ENCODE measurements at regions of chr16 and their contacts with region 1.

Region 1: DNA sequence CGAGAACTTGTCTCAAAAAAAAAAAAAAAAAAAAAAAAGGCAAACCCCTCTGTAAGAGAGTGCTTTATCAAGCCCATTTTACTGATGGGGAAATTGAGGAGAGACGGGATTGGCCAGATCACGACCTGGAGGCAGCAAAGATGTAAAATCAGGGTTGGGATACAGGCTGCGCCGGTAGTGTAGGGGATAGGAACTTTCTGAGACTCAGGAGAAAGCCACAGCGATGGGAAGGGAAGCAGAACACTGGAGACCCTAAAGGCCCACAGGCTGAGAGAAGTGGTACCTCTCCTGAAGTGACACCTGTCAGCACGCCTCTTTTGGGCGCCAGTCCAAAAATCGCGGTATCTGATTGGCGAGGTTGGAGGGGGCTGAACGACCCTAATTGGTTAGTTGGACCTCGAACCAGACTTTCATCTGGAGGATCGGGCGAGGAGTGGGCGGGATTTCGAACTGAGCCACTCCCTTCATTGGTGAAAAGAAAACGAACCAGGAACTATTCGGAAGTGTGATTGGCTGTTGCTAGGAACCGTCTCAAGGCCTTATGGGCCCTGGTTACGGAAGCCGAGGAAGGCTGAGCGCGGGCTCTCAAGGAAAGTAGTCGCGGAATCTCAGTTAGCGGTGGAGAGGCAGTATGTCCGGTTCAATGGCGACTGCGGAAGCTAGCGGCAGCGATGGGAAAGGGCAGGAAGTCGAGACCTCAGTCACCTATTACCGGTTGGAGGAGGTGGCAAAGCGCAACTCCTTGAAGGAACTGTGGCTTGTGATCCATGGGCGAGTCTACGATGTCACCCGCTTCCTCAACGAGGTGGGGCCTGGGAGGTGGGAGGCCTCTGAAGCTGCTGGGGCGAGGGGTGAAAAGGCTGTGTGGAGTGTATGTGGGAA is at the start of gene CYB5B:
- DNase-seq: peak; percentile 90 to 99 (median 95)
- ATAC-seq: peak; percentile 94
- H3K4me3 ChIP-seq: peak within 1 kb of the TSS; percentile 97 to 99
- H3K4me3 Mint-ChIP-seq: peak within 1 kb of the TSS; percentile 98
- H3K27ac ChIP-seq: peak within 1 kb of the TSS; percentile 86 to 87
- H3K27ac Mint-ChIP-seq: peak within 1 kb of the TSS; percentile 95
- H3K4me1 ChIP-seq: peaks cover 8% of the 10 kb centered on the region
- H3K4me1 Mint-ChIP-seq: peaks cover 35% of the 10 kb centered on the region
- H3K27me3 ChIP-seq: no peaks in the 10 kb centered on the region
- H3K27me3 Mint-ChIP-seq: no peaks in the 10 kb centered on the region
- CTCF ChIP-seq: no peak
- total RNA-seq, gene CYB5B: 16.2 to 18.6 TPM

Region 2: DNA sequence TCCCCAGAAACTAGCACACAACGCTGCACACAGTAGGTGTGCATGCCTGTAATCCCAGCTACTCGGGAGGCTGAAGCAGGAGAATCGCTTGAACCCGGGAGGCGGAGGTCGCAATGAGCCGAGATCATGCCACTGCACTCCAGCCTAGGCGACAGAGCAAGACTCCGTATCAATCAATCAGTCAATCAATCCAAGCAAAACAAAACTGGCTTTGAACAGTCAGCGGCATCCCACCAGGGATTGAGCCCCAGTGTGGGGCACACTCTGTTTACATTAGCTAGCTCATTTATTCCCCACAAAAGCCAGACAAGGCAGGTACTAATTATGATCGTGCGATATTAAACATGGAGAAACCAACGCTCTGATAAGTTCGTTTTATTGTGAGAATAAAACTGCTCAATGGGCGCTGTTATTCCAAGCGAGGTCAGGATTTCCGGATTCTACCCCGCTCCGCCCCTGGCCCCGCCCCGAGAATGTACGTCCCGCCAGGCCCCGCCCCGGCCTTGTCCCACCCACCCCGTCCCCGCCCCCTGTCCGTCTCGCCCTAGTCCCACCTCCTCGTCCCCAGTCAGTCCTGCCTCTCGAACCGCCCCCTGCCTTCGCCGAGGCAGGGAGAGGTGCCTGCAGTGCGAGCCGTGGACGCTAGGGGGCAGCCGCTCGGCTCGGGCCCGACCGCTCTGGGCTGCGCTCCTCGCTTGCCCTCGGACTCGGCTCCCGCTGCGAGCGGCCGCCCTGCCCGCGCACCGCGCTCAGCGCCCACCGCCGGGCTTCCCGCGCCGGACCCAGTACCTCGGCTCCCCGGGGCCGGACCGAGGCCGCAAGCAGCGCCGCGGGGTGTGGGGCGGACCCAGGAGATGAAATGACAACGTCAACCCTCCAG is 113.4 kb before region 1 on chr16 and contains the start of gene VPS4A:
- CTCF ChIA-PET with region 1: no interaction called
- POLR2A ChIA-PET with region 1: no interaction called
- intact Hi-C with region 1: loop called (anchors 1 kb)
- DNase-seq: peak; percentile 96 to 99 (median 98)
- ATAC-seq: peak; percentile 98
- H3K4me3 ChIP-seq: peak within 1 kb of the TSS; percentile 66 to 79
- H3K4me3 Mint-ChIP-seq: peak within 1 kb of the TSS; percentile 99
- H3K27ac ChIP-seq: peak within 1 kb of the TSS; percentile 72 to 82
- H3K27ac Mint-ChIP-seq: peak within 1 kb of the TSS; percentile 95
- H3K4me1 ChIP-seq: peaks cover 17% of the 10 kb centered on the region
- H3K4me1 Mint-ChIP-seq: peaks cover 27% of the 10 kb centered on the region
- H3K27me3 ChIP-seq: no peaks in the 10 kb centered on the region
- H3K27me3 Mint-ChIP-seq: no peaks in the 10 kb centered on the region
- CTCF ChIP-seq: peak; percentile 73
- total RNA-seq, gene VPS4A: 64.2 to 66.5 TPM

Region 3: GRCh38 chr16:69330286-69331109 is 93.8 kb before region 1 on chr16 and contains the start of gene PDF:
- CTCF ChIA-PET with region 1: no interaction called
- POLR2A ChIA-PET with region 1: no interaction called
- intact Hi-C with region 1: loop called in 1 of 2 experiments (anchors 2 kb)
- DNase-seq: peak in 8 of 9 experiments; percentile 79 to 91 (median 82)
- ATAC-seq: peak; percentile 91
- H3K4me3 ChIP-seq: peak within 1 kb of the TSS; percentile 53 to 83
- H3K4me3 Mint-ChIP-seq: peak within 1 kb of the TSS; percentile 79
- H3K27ac ChIP-seq: peak within 1 kb of the TSS; percentile 60 to 75
- H3K27ac Mint-ChIP-seq: peak within 1 kb of the TSS; percentile 74
- H3K4me1 ChIP-seq: peaks cover 43% of the 10 kb centered on the region
- H3K4me1 Mint-ChIP-seq: peaks cover 52% of the 10 kb centered on the region
- H3K27me3 ChIP-seq: no peaks in the 10 kb centered on the region
- H3K27me3 Mint-ChIP-seq: no peaks in the 10 kb centered on the region
- CTCF ChIP-seq: no peak
- total RNA-seq, gene PDF: 3.3 to 3.6 TPM

Region 4: DNA sequence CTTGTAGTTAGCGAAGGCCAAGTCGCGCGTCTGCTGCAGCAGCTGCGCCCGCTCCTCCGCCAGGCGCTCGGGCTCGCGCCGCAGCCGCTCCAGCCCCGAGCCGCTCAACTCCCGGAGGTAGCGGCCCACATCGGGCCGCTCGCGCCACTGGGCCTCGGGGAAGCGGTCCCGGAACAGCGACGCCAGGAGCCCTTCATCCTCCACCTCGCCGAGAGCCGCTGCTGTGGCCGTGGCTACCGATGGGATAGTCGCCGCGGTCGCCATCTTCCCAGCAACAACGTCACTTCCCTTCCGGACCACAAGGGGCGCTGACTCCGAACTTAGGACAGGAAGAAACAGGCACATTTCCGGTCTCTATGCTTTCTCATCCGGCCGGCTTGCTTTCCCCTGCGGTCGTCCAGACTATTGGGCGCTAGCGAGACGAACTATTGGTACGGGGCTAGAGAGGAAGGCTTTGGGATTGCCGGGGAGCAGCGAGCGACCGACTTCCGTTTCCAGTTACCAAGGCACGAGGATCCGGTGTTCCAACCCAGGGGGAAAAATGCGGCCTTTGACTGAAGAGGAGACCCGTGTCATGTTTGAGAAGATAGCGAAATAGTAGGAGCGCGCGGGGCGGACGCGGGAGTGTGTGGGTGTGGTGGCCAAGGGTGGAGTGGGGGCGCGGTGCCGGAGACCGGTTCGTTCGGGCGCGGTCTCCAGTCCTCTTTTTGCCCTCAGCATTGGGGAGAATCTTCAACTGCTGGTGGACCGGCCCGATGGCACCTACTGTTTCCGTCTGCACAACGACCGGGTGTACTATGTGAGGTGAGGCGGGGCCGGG is 84.8 kb before region 1 on chr16 and contains the starts of genes COG8 and NIP7:
- CTCF ChIA-PET with region 1: no interaction called
- POLR2A ChIA-PET with region 1: no interaction called
- intact Hi-C with region 1: loop called (anchors 1 kb)
- DNase-seq: peak; percentile 82 to 96 (median 91)
- ATAC-seq: peak; percentile 89
- H3K4me3 ChIP-seq: peak within 1 kb of the TSS; percentile 82 to 86
- H3K4me3 Mint-ChIP-seq: peak within 1 kb of the TSS; percentile 100
- H3K27ac ChIP-seq: peak within 1 kb of the TSS; percentile 70 to 85
- H3K27ac Mint-ChIP-seq: peak within 1 kb of the TSS; percentile 98
- H3K4me1 ChIP-seq: peaks cover 26% of the 10 kb centered on the region
- H3K4me1 Mint-ChIP-seq: peaks cover 58% of the 10 kb centered on the region
- H3K27me3 ChIP-seq: no peaks in the 10 kb centered on the region
- H3K27me3 Mint-ChIP-seq: no peaks in the 10 kb centered on the region
- CTCF ChIP-seq: peak; percentile 85
- total RNA-seq, gene COG8: 19.3 to 19.6 TPM
- total RNA-seq, gene NIP7: 44.9 to 50.0 TPM

Region 5: DNA sequence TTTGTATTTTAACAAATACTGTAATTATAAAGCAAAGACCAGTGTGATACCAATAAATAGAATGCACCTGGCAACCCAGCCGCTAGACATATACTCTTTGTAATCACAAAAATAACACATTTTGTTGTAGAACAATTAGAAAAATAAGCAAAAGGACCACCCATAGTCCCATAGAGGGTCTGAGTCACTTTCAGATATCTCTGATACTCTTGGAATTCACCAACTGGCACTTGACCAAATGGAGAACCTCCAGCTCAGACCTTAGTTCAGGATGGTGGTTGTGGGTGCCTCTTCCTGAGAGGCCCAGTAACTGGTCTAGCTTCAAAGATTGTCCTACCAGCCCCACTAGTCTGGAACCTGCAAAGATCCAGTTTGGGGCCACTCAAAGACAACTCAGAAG is 37.7 kb before region 1 on chr16:
- CTCF ChIA-PET with region 1: no interaction called
- POLR2A ChIA-PET with region 1: interaction called, 3 read pairs
- intact Hi-C with region 1: loop called (anchors 1 kb)
- DNase-seq: no peak
- ATAC-seq: no peak
- H3K4me3 ChIP-seq: peak overlapping the region in 1 of 2 experiments; percentile 46
- H3K4me3 Mint-ChIP-seq: peak overlapping the region; percentile 89
- H3K27ac ChIP-seq: peak overlapping the region in 1 of 2 experiments; percentile 55
- H3K27ac Mint-ChIP-seq: no peak overlapping the region
- H3K4me1 ChIP-seq: peaks cover 12% of the 10 kb centered on the region
- H3K4me1 Mint-ChIP-seq: peaks cover 30% of the 10 kb centered on the region
- H3K27me3 ChIP-seq: no peaks in the 10 kb centered on the region
- H3K27me3 Mint-ChIP-seq: no peaks in the 10 kb centered on the region
- CTCF ChIP-seq: no peak

Region 6: DNA sequence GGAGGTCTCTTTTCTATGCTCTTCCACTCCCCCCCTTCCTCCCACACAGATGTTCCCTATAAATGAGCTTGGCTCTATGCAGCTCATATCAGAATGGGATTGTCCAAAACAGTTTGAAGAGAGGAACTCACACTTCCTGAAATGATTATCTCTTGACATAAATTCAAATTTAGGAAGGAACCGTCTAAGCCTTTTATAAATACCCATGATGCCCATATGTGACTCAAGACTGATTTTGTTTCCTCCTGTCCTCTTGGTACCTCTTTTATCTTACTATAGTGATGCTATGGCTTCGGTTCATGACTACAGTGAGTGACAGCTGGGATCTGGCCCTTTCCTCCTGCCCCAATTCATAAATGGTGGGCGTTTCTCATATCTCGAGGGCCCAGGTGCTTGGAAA is 21.9 kb before region 1 on chr16:
- CTCF ChIA-PET with region 1: no interaction called
- POLR2A ChIA-PET with region 1: no interaction called
- intact Hi-C with region 1: no loop called
- DNase-seq: no peak
- ATAC-seq: no peak
- H3K4me3 ChIP-seq: no peak overlapping the region
- H3K4me3 Mint-ChIP-seq: no peak overlapping the region
- H3K27ac ChIP-seq: no peak overlapping the region
- H3K27ac Mint-ChIP-seq: no peak overlapping the region
- H3K4me1 ChIP-seq: no peaks in the 10 kb centered on the region
- H3K4me1 Mint-ChIP-seq: no peaks in the 10 kb centered on the region
- H3K27me3 ChIP-seq: no peaks in the 10 kb centered on the region
- H3K27me3 Mint-ChIP-seq: no peaks in the 10 kb centered on the region
- CTCF ChIP-seq: no peak

Region 7: DNA sequence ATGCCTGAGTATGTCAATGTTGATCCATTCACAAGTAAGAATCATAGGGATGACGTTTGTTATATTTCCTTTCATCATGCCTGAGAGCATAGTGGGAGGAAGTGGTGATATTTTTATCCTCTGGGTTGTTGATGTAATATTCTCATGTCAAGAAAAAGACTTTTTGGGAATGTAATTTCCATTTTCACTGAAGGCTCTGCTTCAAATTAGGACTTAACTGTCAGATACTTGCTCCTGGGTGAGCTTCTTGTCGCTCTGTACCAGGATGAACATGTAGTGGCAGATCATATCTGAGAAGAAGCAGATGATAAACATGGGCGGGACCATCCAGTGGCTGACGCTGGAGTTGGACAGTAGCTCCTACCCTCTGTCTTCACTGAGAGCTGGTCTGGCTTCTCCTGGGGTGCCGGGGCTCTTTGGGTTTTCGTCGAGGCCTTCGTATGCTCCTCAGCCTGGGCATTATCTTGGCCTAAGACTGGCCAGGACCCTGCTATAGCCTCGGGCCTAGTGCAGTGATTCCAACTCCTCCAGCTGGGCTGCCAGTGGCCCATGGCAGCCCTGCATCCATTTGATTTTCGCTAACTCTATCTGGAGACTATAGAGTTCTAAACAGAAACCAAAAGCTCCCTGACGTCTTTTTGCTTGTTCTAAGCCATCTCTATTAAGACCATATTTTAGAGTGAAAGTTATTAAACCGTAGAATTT is 19.8 kb after region 1 on chr16:
- CTCF ChIA-PET with region 1: no interaction called
- POLR2A ChIA-PET with region 1: interaction called, 4 read pairs
- intact Hi-C with region 1: loop called (anchors 1 to 2 kb)
- DNase-seq: peak in 8 of 9 experiments; percentile 11 to 63 (median 42)
- ATAC-seq: peak; percentile 80
- H3K4me3 ChIP-seq: peak overlapping the region; percentile 28 to 39
- H3K4me3 Mint-ChIP-seq: peak overlapping the region; percentile 82
- H3K27ac ChIP-seq: peak overlapping the region; percentile 57 to 86
- H3K27ac Mint-ChIP-seq: peak overlapping the region; percentile 98
- H3K4me1 ChIP-seq: peaks cover 12% of the 10 kb centered on the region
- H3K4me1 Mint-ChIP-seq: peaks cover 35% of the 10 kb centered on the region
- H3K27me3 ChIP-seq: no peaks in the 10 kb centered on the region
- H3K27me3 Mint-ChIP-seq: no peaks in the 10 kb centered on the region
- CTCF ChIP-seq: no peak

Region 8: DNA sequence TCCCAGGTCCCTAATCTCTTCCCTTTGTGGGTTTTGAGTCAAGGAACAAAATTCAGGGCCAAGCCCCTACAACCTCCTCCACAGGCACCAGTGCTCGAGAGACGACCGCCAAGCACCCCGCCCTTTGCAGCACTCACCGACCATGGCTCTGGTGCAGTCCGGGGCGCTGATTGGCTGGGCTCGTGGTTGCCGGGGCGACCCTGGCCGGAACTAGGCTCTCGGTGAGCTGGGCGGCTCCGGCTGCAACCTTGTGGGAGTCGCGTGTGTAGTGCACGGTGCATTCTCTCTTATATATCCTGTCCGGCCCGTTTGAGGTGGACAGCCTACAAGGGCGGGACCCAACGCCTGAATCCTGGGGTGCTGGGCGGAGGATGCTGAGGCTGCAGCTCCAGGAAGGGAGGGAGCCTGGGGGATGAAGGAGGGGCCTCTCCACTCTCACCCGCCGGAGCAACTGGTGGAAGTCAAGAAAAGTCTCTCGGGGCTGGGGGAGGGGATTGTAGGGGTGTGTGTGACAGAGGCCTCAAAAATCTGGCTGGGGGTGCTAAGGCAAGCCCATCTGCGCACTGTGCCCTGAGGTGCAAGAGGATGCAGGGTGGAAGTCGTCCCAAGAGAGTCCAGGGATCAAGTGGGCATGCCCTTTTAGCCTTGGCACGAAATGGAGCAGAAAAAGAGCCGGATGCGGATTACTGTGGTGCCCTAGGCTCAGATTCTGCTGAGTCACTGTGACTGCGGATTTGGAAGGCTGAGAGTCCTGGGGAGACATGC is 302.2 kb after region 1 on chr16 and contains the start of gene NQO1:
- CTCF ChIA-PET with region 1: no interaction called
- POLR2A ChIA-PET with region 1: no interaction called
- intact Hi-C with region 1: loop called in 1 of 2 experiments (anchors 1 kb)
- DNase-seq: peak; percentile 66 to 95 (median 85)
- ATAC-seq: peak; percentile 97
- H3K4me3 ChIP-seq: peak within 1 kb of the TSS; percentile 63 to 85
- H3K4me3 Mint-ChIP-seq: peak within 1 kb of the TSS; percentile 91
- H3K27ac ChIP-seq: peak within 1 kb of the TSS; percentile 54 to 67
- H3K27ac Mint-ChIP-seq: peak within 1 kb of the TSS; percentile 87
- H3K4me1 ChIP-seq: peaks cover 20% of the 10 kb centered on the region
- H3K4me1 Mint-ChIP-seq: peaks cover 23% of the 10 kb centered on the region
- H3K27me3 ChIP-seq: no peaks in the 10 kb centered on the region
- H3K27me3 Mint-ChIP-seq: no peaks in the 10 kb centered on the region
- CTCF ChIP-seq: no peak
- total RNA-seq, gene NQO1: 0.27 to 0.28 TPM

Measured in CD8-positive, alpha-beta T cell (primary cell).